ENCODE measurements at regions of chr7 and their contacts with region 1.

Region 1: GRCh38 chr7:129536323-129536722 is 34.0 kb downstream of the SMKR1 start:
- DNase-seq: peak in 1 of 2 donors; percentile 31
- ATAC-seq: peak in 2 of 3 donors; percentile 56 to 57
- H3K4me3 ChIP-seq: peak overlapping the region; percentile 15
- H3K4me3 Mint-ChIP-seq: peak overlapping the region; percentile 96
- H3K27ac ChIP-seq: peak overlapping the region; percentile 90
- H3K27ac Mint-ChIP-seq: peak overlapping the region; percentile 92 to 99
- H3K4me1 ChIP-seq: peaks cover 46% of the 10 kb centered on the region
- H3K4me1 Mint-ChIP-seq: peaks cover 55 to 64% of the 10 kb centered on the region in 2 donors
- H3K27me3 ChIP-seq: no peaks in the 10 kb centered on the region
- H3K27me3 Mint-ChIP-seq: no peaks in the 10 kb centered on the region
- CTCF ChIP-seq: no peak

Region 2: DNA sequence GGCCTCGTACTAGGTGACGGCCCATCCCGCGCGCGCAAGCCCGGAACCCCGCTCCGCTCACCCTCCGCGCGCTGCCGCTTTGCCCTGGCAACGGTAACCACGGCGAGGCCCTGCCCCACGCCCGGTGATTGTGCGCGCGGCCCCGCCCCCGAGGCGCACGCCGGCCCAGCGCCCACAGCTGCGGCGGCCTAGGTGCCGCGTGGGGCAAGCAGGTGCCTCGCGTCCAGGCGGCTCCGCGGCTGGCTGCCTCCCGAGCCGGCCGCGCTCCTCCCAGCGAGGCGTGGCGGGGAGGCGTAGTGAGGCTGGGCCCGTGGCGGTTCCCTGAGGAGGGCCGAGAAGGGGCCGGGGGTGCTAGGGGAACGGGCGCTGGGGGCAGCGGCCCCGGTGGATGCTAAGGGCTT is 33.9 kb before region 1 on chr7 and contains the start of gene SMKR1:
- intact Hi-C with region 1: loop called (anchors 5 kb)
- DNase-seq: peak; percentile 75 to 98
- ATAC-seq: peak; percentile 92 to 98 (median 95)
- H3K4me3 ChIP-seq: peak within 1 kb of the TSS; percentile 57
- H3K4me3 Mint-ChIP-seq: peak within 1 kb of the TSS; percentile 91
- H3K27ac ChIP-seq: peak within 1 kb of the TSS; percentile 83
- H3K27ac Mint-ChIP-seq: peak within 1 kb of the TSS; percentile 85 to 88
- H3K4me1 ChIP-seq: peaks cover 33% of the 10 kb centered on the region
- H3K4me1 Mint-ChIP-seq: peaks cover 30 to 31% of the 10 kb centered on the region in 2 donors
- H3K27me3 ChIP-seq: no peaks in the 10 kb centered on the region
- H3K27me3 Mint-ChIP-seq: no peaks in the 10 kb centered on the region
- CTCF ChIP-seq: no peak
- total RNA-seq, gene SMKR1: 4.9 to 9.7 (median 8.4) TPM

Region 3: DNA sequence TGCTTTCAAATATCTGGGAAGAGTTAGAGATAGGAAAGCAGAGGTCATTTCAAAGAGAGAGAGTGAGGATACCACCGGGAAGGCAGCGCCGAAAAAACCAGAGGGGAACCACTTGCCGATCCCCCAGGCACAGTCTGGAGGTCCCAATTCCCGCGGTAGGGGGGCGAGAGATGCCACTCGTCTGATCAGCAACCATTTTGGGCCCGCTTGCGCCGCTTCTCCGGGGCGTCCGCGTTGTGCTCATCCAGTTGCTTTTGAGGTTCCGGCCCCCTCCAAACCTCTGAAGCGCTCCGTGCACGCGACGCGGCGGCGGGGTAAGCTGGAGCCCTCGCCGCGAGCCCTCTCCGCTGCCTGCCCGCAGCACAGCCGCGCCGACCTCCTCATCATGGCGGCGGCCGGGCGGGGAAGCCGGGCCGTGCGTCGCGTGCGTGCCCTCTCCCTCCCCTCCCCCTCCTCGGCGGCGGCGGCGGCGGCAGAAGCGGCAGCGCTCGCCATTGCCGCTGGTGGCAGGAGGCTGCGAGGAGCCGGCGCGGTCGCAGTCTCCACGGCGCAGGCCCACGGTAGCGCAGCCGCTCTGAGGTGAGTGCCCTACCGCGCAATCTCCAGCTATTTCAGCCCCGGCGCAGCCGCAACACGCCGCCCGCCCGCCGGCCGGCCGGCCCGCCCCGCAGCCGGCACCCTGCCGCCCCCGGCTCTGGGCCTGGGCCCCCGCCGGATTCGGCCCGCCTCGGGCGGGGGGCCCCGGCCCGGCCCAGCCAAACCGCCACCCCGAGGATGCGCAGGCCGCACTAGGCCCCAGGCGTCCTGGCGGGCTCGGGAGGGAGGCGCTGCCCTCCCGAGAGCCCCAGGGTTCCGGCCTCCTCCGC is 75.2 kb after region 1 on chr7 and contains the start of gene NRF1:
- intact Hi-C with region 1: loop called (anchors 5 kb)
- DNase-seq: peak; percentile 92 to 95
- ATAC-seq: peak; percentile 79 to 94 (median 87)
- H3K4me3 ChIP-seq: peak within 1 kb of the TSS; percentile 93
- H3K4me3 Mint-ChIP-seq: peak within 1 kb of the TSS; percentile 97
- H3K27ac ChIP-seq: peak within 1 kb of the TSS; percentile 91
- H3K27ac Mint-ChIP-seq: peak within 1 kb of the TSS; percentile 95 to 96
- H3K4me1 ChIP-seq: peaks cover 42% of the 10 kb centered on the region
- H3K4me1 Mint-ChIP-seq: peaks cover 48 to 71% of the 10 kb centered on the region in 2 donors
- H3K27me3 ChIP-seq: no peaks in the 10 kb centered on the region
- H3K27me3 Mint-ChIP-seq: no peaks in the 10 kb centered on the region
- CTCF ChIP-seq: no peak
- total RNA-seq, gene NRF1: 39.8 to 43.5 (median 40.1) TPM

Region 4: GRCh38 chr7:129952653-129953560 is 416.6 kb after region 1 on chr7 and contains the start of gene UBE2H:
- intact Hi-C with region 1: loop called (anchors 5 kb)
- DNase-seq: peak; percentile 87 to 96
- ATAC-seq: peak; percentile 73 to 90 (median 83)
- H3K4me3 ChIP-seq: peak within 1 kb of the TSS; percentile 63
- H3K4me3 Mint-ChIP-seq: peak within 1 kb of the TSS; percentile 98
- H3K27ac ChIP-seq: peak within 1 kb of the TSS; percentile 80
- H3K27ac Mint-ChIP-seq: no peak within 1 kb of the TSS
- H3K4me1 ChIP-seq: peaks cover 43% of the 10 kb centered on the region
- H3K4me1 Mint-ChIP-seq: peaks cover 7 to 9% of the 10 kb centered on the region in 2 donors
- H3K27me3 ChIP-seq: no peaks in the 10 kb centered on the region
- H3K27me3 Mint-ChIP-seq: peaks cover 2 to 6% of the 10 kb centered on the region in 2 donors
- CTCF ChIP-seq: no peak
- total RNA-seq, gene UBE2H: 80.9 to 86.9 (median 83.1) TPM